Activated B cell treated with CpG ODN at 0.5 μM for 24 hours (primary cell): ENCODE measurements at regions of chr1 and their contacts with region 1.

Region 1: DNA sequence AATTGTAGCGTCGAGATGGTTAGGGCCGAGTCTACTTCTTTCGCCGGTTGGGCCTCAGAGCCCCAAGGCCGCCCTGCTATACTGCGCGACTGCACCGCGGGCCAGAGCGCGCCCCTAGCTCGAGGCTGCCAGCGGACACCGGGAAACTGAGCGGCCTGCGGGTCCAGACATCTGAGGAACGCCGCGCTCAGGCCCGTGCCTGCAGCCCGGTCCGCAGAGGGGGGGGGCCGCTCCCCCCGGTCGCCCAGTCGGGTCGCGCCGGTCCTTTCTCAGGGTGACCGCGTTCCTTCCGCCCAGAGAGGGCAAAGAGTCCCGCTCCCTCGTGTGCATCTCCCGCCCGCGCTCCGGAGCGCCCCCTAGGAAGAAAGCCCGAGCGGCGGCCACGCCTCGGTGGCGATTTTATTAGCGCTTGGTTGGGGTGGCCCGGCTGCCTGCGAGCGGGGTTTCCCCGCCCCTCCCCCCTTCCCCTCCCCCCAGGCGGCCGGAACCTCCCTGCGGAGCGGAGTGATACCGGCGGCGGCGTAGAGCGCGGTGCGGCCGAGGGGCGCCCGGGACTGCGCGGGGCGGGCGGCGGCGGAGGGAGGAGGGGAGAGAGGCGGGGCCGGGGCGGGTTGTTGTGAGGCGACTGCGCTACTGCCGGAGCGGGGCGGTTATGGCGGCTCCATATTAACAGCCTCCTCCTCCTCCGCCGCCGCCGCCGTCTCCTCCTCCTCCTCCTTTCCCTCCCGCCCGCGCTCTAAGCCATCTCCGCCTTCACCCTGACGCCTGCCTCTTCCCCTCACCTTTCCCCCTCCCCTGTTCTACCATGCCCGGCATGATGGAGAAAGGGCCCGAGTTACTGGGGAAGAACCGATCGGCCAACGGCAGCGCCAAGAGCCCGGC is at the start of gene RCOR3:
- DNase-seq: peak; percentile 86
- ATAC-seq: peak; percentile 75
- H3K4me3 Mint-ChIP-seq: peak within 1 kb of the TSS; percentile 93
- H3K27ac Mint-ChIP-seq: peak within 1 kb of the TSS; percentile 97
- H3K4me1 Mint-ChIP-seq: peaks cover 20% of the 10 kb centered on the region
- H3K27me3 Mint-ChIP-seq: no peaks in the 10 kb centered on the region
- CTCF ChIP-seq: peak; percentile 59
- total RNA-seq, gene RCOR3: 59.3 and 72.3 TPM in 2 replicates

Region 2: DNA sequence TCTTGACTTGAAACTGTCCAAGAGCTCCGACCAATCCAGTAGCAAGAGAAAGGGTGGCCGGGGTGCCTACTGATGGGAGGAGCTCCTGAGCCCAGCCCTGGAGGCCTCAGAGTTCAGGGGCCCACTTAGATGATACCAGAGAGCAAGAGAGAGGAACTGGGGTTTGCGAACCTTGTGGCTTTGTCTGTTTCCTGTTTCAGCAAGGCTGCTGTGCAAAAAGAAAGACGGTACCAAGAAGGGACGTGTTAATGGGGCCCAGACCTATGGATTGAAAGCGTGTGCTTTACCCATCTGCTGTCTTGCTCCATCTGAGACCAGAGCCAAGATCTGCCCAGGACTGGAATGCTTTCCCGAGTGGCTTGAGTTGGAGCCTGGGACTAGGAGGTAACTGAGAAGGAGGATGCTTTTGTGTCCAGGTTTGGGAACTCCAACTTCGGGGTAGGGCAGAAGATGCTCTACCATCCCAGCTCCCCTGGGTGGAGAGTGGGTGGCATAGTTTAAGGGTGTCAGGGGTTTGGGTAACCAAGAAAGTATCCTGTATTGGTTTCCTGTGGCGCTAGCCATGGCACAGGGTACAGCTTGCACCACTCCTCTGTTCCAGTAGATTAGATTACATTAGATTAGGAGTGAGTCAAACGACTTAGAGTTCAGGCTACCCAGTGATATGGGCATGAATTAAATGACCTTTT is 1502.9 kb before region 1 on chr1 and contains the start of gene TRAF3IP3:
- CTCF ChIA-PET with region 1: no interaction called
- POLR2A ChIA-PET with region 1: no interaction called
- intact Hi-C with region 1: loop called (anchors 5 kb)
- DNase-seq: peak; percentile 41
- ATAC-seq: peak; percentile 91
- H3K4me3 Mint-ChIP-seq: peak within 1 kb of the TSS; percentile 96
- H3K27ac Mint-ChIP-seq: peak within 1 kb of the TSS; percentile 99
- H3K4me1 Mint-ChIP-seq: peaks cover 85% of the 10 kb centered on the region
- H3K27me3 Mint-ChIP-seq: no peaks in the 10 kb centered on the region
- CTCF ChIP-seq: no peak
- total RNA-seq, gene TRAF3IP3: 158 and 166 TPM in 2 replicates

Region 3: DNA sequence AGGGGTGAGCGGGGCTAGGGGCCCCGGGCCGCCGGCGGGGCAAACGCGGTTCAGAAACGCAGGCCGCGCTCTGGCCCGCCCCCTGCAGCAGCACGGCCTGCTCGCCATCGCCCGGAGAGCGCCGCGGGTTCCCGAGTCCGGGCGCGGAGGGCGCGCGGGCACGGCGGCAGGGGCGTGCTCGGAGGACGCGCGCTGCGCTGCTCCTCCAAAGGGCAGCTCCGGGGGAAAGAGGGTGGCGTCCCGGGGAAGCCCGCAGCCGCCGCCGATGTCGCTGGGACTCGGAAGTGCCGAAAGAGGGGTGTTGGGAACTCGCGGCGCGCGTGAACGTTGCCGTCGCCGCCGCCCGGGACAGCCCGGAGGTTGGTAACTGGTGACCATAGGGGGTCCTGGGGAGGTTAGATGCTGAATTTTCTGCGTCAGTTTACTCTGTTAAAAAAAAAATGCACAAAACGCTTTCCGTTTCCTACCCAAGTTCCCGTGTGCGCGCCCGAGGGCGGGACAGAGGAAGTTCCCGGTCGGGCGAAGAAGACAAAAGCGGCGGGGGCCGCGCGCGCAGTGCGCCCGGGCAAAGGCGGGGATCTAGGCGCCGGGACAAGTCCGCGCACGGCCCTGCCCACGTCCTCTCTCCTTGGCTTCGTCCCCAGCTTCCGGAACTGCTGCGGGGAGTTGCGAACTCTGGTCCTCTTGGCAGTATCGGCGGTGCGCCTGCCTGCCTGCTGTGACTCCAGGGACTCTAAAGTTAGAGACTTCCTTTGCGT is 930.1 kb before region 1 on chr1 and contains the start of gene HHAT:
- CTCF ChIA-PET with region 1: no interaction called
- POLR2A ChIA-PET with region 1: no interaction called
- intact Hi-C with region 1: loop called (anchors 2 kb)
- DNase-seq: peak; percentile 73
- ATAC-seq: peak; percentile 80
- H3K4me3 Mint-ChIP-seq: peak within 1 kb of the TSS; percentile 97
- H3K27ac Mint-ChIP-seq: peak within 1 kb of the TSS; percentile 96
- H3K4me1 Mint-ChIP-seq: peaks cover 43% of the 10 kb centered on the region
- H3K27me3 Mint-ChIP-seq: peaks cover 6% of the 10 kb centered on the region
- CTCF ChIP-seq: no peak
- total RNA-seq, gene HHAT: 6.1 and 8.5 TPM in 2 replicates

Region 4: GRCh38 chr1:211279340-211279739 is 20.3 kb after region 1 on chr1:
- CTCF ChIA-PET with region 1: no interaction called
- POLR2A ChIA-PET with region 1: interaction called, 7 read pairs
- intact Hi-C with region 1: loop called (anchors 2 kb)
- DNase-seq: no peak
- ATAC-seq: no peak
- H3K4me3 Mint-ChIP-seq: no peak overlapping the region
- H3K27ac Mint-ChIP-seq: no peak overlapping the region
- H3K4me1 Mint-ChIP-seq: no peaks in the 10 kb centered on the region
- H3K27me3 Mint-ChIP-seq: no peaks in the 10 kb centered on the region
- CTCF ChIP-seq: no peak

Region 5: GRCh38 chr1:211501711-211502400 is 242.9 kb after region 1 on chr1:
- CTCF ChIA-PET with region 1: no interaction called
- POLR2A ChIA-PET with region 1: no interaction called
- intact Hi-C with region 1: no loop called
- DNase-seq: no peak
- ATAC-seq: no peak
- H3K4me3 Mint-ChIP-seq: no peak overlapping the region
- H3K27ac Mint-ChIP-seq: no peak overlapping the region
- H3K4me1 Mint-ChIP-seq: no peaks in the 10 kb centered on the region
- H3K27me3 Mint-ChIP-seq: peaks cover 9% of the 10 kb centered on the region
- CTCF ChIP-seq: no peak

Region 6: GRCh38 chr1:211514030-211514754 is 255.2 kb after region 1 on chr1:
- CTCF ChIA-PET with region 1: interaction called, 6 read pairs
- POLR2A ChIA-PET with region 1: no interaction called
- intact Hi-C with region 1: loop called (anchors 1 kb)
- DNase-seq: peak; percentile 59
- ATAC-seq: peak; percentile 71
- H3K4me3 Mint-ChIP-seq: peak overlapping the region; percentile 78
- H3K27ac Mint-ChIP-seq: peak overlapping the region; percentile 51
- H3K4me1 Mint-ChIP-seq: peaks cover 43% of the 10 kb centered on the region
- H3K27me3 Mint-ChIP-seq: peaks cover 6% of the 10 kb centered on the region
- CTCF ChIP-seq: no peak

Region 7: GRCh38 chr1:213015099-213016050 is 1756.4 kb after region 1 on chr1 and contains the start of gene ANGEL2:
- CTCF ChIA-PET with region 1: no interaction called
- POLR2A ChIA-PET with region 1: no interaction called
- intact Hi-C with region 1: loop called (anchors 10 kb)
- DNase-seq: peak; percentile 87
- ATAC-seq: peak; percentile 95
- H3K4me3 Mint-ChIP-seq: peak within 1 kb of the TSS; percentile 100
- H3K27ac Mint-ChIP-seq: peak within 1 kb of the TSS; percentile 99
- H3K4me1 Mint-ChIP-seq: peaks cover 20% of the 10 kb centered on the region
- H3K27me3 Mint-ChIP-seq: no peaks in the 10 kb centered on the region
- CTCF ChIP-seq: no peak
- total RNA-seq, gene ANGEL2: 54.1 and 63.3 TPM in 2 replicates